HCT116 (cell line): ENCODE measurements at regions of chr19 and their contacts with region 1.

Region 1: GRCh38 chr19:19404879-19405860 is at the start of gene GATAD2A:
- DNase-seq: peak; percentile 78
- ATAC-seq: peak; percentile 79
- H3K4me3 ChIP-seq: peak within 1 kb of the TSS; percentile 56 to 68
- H3K27ac ChIP-seq: peak within 1 kb of the TSS; percentile 81
- H3K4me1 ChIP-seq: peaks cover 39 to 59% of the 10 kb centered on the region in 2 experiments
- H3K27me3 ChIP-seq: no peaks in the 10 kb centered on the region
- CTCF ChIP-seq: peak in 1 of 3 experiments; percentile 20; a peak in 1 of 6 replicates
- POLR2A ChIP-seq: no peak
- RAD21 ChIP-seq: peak; percentile 44; the same call in 1 of the 2 replicates
- total RNA-seq, gene GATAD2A: 130 TPM

Region 2: GRCh38 chr19:19366612-19367396 is 38.4 kb before region 1 on chr19:
- CTCF ChIA-PET with region 1: interaction called, 4 read pairs
- POLR2A ChIA-PET with region 1: interaction called, 8 read pairs
- RAD21 ChIA-PET with region 1: no interaction called
- intact Hi-C with region 1: loop called (anchors 2 kb)
- DNase-seq: peak; percentile 95
- ATAC-seq: peak; percentile 88
- H3K4me3 ChIP-seq: peak overlapping the region; percentile 22 to 53
- H3K27ac ChIP-seq: peak overlapping the region; percentile 81
- H3K4me1 ChIP-seq: peaks cover 28 to 47% of the 10 kb centered on the region in 2 experiments
- H3K27me3 ChIP-seq: no peaks in the 10 kb centered on the region
- CTCF ChIP-seq: peak; percentile 94 to 99 (median 99)
- POLR2A ChIP-seq: no peak
- RAD21 ChIP-seq: peak; percentile 99

Region 3: DNA sequence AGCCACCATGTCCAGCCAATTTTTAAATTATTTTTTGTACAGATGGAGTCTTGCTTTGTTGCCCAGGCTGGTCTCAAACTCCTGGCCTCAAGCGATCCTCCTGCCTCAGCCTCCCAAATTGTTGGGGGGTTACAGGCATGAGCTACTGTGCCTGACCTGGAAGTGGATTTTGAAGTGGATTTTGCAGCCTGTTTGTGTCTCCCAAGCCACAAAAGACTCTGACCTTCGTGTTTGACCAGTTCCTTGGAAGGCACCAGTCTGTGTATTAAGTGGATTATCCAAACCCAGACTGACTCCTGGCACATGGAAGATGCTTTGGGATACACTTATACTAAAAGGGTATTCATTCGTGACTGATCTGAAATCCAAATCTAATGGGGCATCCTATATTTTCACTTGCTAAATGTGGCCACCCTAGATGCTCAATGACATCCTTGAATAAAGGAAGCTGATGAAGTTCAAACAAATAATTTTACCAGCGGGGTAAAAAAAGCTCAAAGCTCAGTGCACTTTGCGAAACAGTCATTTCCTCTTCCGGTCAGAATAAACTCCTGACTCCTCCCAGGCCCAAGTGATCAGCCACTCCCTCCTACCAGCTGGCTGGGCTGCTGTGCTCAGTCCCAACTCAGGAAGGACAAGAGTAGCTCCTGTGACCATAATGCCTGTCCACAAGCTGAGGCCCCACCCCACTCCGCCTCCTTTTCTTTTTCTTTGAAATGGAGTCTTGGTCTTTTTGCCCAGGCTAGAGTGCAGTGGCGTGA is 32.3 kb before region 1 on chr19:
- CTCF ChIA-PET with region 1: interaction called, 4 read pairs
- POLR2A ChIA-PET with region 1: interaction called, 12 read pairs
- RAD21 ChIA-PET with region 1: no interaction called
- intact Hi-C with region 1: no loop called
- DNase-seq: peak; percentile 50
- ATAC-seq: peak; percentile 76
- H3K4me3 ChIP-seq: no peak overlapping the region
- H3K27ac ChIP-seq: peak overlapping the region; percentile 72
- H3K4me1 ChIP-seq: peaks cover 44 to 56% of the 10 kb centered on the region in 2 experiments
- H3K27me3 ChIP-seq: no peaks in the 10 kb centered on the region
- CTCF ChIP-seq: no peak
- POLR2A ChIP-seq: no peak
- RAD21 ChIP-seq: no peak

Region 4: DNA sequence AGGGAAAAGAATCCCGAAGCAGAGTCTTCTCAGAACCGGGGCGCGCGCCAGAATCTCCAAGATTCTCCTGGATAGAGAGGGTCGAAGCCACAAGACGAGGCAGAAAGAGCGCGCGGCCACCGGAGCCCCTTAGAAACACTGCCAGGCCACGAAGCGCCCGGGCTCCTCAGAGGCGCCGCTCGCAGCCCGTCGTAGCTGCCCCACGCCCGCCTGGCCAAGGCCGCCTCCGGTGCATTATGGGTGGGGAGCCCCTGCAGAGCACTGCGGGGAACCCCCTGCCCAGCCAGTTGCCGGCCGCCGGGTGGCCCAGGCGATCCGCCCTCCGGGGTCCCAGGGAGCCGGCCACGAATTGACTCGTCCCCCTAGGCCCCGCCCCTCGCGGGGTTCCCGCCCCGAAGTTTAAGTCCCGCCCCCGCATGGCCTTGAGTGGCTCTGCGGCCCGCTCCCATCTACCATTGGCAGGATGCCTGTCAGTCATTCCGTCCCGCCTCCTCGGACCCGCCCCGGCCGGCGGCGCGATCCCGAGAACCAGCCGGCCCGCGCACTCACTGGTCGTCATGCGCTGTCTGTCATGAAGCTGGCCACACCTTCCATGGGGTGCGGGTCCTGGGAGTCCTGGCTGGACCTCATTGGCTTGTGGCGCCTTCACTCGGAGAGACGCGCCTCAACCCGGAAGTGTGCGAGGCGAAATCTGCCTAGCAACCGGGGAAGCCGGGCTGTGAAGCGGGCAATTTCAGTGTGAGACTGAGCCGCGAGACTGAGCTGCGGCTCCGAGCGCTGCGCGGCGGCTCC is 19.9 kb before region 1 on chr19:
- CTCF ChIA-PET with region 1: interaction called, 3 read pairs
- POLR2A ChIA-PET with region 1: no interaction called
- RAD21 ChIA-PET with region 1: no interaction called
- intact Hi-C with region 1: loop called (anchors 2 kb)
- DNase-seq: peak; percentile 99
- ATAC-seq: peak; percentile 97
- H3K4me3 ChIP-seq: peak overlapping the region; percentile 92 to 94
- H3K27ac ChIP-seq: peak overlapping the region; percentile 97
- H3K4me1 ChIP-seq: peaks cover 20 to 43% of the 10 kb centered on the region in 2 experiments
- H3K27me3 ChIP-seq: no peaks in the 10 kb centered on the region
- CTCF ChIP-seq: no peak
- POLR2A ChIP-seq: no peak
- RAD21 ChIP-seq: no peak

Region 5: DNA sequence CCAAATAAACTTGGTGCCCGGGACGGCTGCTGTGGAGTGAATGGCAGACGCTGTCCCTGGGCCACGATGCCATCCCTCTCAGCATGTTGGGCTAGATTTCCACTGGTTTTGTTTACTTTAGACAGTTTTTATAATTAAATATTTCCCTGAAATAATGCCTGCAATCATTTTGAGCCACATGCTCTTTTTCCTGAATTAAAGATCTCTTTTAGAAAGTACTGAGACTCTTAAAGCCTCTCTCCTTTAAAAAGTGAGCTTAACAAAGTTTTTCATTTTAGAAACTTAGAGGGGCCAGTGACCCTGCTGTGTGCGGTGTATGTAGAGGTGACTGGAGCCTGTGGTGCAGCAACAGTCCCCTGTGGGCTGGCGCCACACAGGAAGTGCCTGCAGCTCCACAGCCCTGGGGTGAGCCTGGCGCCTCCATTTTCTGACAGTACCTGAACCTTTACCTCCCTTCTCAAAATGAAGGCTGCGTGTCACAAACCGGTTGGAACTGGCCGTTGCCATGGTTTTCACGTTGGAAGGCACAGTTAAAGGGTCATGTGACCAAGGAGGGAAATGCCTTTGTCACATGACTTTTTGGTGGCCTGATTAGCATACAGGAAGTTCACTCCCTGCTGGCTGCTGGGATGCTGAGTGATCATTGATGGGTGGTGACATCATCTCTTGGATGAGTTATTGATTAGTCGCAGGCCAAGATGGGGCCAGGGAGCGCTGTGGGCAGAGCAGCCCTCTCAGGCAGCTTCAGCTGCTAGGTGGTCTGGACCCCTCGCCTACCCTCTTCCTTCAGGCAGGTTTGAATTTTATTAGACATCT is 83.9 kb after region 1 on chr19:
- CTCF ChIA-PET with region 1: interaction called, 11 read pairs
- POLR2A ChIA-PET with region 1: no interaction called
- RAD21 ChIA-PET with region 1: no interaction called
- intact Hi-C with region 1: loop called (anchors 5 kb)
- DNase-seq: peak; percentile 89
- ATAC-seq: peak; percentile 70
- H3K4me3 ChIP-seq: peak overlapping the region in 1 of 2 experiments; percentile 5; a peak in 1 of 4 replicates
- H3K27ac ChIP-seq: peak overlapping the region; percentile 72
- H3K4me1 ChIP-seq: peaks cover 19 to 43% of the 10 kb centered on the region in 2 experiments
- H3K27me3 ChIP-seq: no peaks in the 10 kb centered on the region
- CTCF ChIP-seq: no peak
- POLR2A ChIP-seq: no peak
- RAD21 ChIP-seq: no peak

Region 6: DNA sequence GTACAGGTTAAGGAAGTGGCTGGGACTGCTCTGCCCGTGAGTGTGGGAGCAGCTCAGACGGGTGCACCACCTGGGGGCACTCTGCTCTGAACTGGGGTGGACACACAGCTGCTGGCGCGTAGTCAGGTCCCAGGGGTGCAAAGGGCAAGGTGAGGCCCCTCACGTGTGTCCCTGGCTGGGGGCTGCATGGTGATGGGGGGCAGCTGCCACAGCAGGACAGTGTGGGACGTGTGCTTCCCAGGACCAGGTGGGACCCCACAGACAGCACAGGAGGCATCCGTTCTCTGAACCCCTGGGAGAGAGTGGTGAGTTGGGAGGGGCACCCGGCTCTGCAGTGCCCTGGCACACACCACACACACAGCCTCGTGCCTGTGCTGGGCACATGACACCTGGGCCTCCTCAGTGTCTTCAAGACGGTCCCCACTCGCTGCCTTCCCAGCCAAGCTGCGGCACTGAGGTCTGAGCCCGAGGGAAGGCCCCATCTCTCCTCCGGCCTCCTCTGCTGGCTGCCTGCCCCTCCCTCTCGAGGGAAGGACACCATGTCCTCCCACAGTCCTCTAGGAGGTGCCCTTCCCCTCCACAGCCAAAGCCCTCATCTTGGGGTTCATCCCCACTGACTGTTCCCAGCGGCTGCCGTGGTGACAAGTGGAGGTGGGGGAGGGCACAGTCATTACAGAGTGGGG is 157.6 kb after region 1 on chr19:
- CTCF ChIA-PET with region 1: no interaction called
- POLR2A ChIA-PET with region 1: no interaction called
- RAD21 ChIA-PET with region 1: no interaction called
- intact Hi-C with region 1: no loop called
- DNase-seq: no peak
- ATAC-seq: peak; percentile 43; the same call in 1 of the 2 replicates
- H3K4me3 ChIP-seq: no peak overlapping the region
- H3K27ac ChIP-seq: no peak overlapping the region
- H3K4me1 ChIP-seq: no peaks in the 10 kb centered on the region
- H3K27me3 ChIP-seq: no peaks in the 10 kb centered on the region
- CTCF ChIP-seq: 0 out of 6 replicates have a peak, but pooled peaks of 1 of the 3 experiments have one; percentile 8
- POLR2A ChIP-seq: no peak
- RAD21 ChIP-seq: peak; percentile 37